ENCODE measurements at regions of chr22 and their contacts with region 1.

Region 1: GRCh38 chr22:36454916-36455570 is 26.4 kb downstream of the TXN2 start:
- DNase-seq: peak; percentile 81 to 96
- H3K4me3 ChIP-seq: peak overlapping the region; percentile 61
- H3K27ac ChIP-seq: peak overlapping the region; percentile 7; the same call in 1 of the 2 replicates
- H3K4me1 ChIP-seq: peaks cover 62% of the 10 kb centered on the region
- H3K27me3 ChIP-seq: no peaks in the 10 kb centered on the region
- CTCF ChIP-seq: 0 out of 2 replicates have a peak, but pooled peaks have one; percentile 15

Region 2: GRCh38 chr22:35357883-35358621 is 1097.0 kb before region 1 on chr22:
- CTCF ChIA-PET with region 1: no interaction called
- POLR2A ChIA-PET with region 1: interaction called, 11 read pairs
- intact Hi-C with region 1: no loop called
- DNase-seq: peak; percentile 78 to 98
- H3K4me3 ChIP-seq: no peak overlapping the region
- H3K27ac ChIP-seq: peak overlapping the region; percentile 74
- H3K4me1 ChIP-seq: peaks cover 8% of the 10 kb centered on the region
- H3K27me3 ChIP-seq: no peaks in the 10 kb centered on the region
- CTCF ChIP-seq: no peak

Region 3: GRCh38 chr22:36311386-36312358 is 143.4 kb before region 1 on chr22:
- CTCF ChIA-PET with region 1: no interaction called
- POLR2A ChIA-PET with region 1: no interaction called
- intact Hi-C with region 1: no loop called
- DNase-seq: peak; percentile 72 to 78
- H3K4me3 ChIP-seq: no peak overlapping the region
- H3K27ac ChIP-seq: no peak overlapping the region
- H3K4me1 ChIP-seq: 0 out of 2 replicates have a peak, but pooled peaks cover 9% of the 10 kb centered on the region
- H3K27me3 ChIP-seq: no peaks in the 10 kb centered on the region
- CTCF ChIP-seq: no peak

Region 4: GRCh38 chr22:36359181-36359996 is 95.7 kb before region 1 on chr22:
- CTCF ChIA-PET with region 1: interaction called, 3 read pairs
- POLR2A ChIA-PET with region 1: interaction called, 10 read pairs
- intact Hi-C with region 1: no loop called
- DNase-seq: no peak
- H3K4me3 ChIP-seq: no peak overlapping the region
- H3K27ac ChIP-seq: peak overlapping the region; percentile 25
- H3K4me1 ChIP-seq: peaks cover 75% of the 10 kb centered on the region
- H3K27me3 ChIP-seq: no peaks in the 10 kb centered on the region
- CTCF ChIP-seq: no peak

Region 5: GRCh38 chr22:36377022-36377631 is 77.9 kb before region 1 on chr22:
- CTCF ChIA-PET with region 1: no interaction called
- POLR2A ChIA-PET with region 1: interaction called, 12 read pairs
- intact Hi-C with region 1: no loop called
- DNase-seq: no peak
- H3K4me3 ChIP-seq: no peak overlapping the region
- H3K27ac ChIP-seq: peak overlapping the region; percentile 4; the same call in 1 of the 2 replicates
- H3K4me1 ChIP-seq: peaks cover 93% of the 10 kb centered on the region
- H3K27me3 ChIP-seq: no peaks in the 10 kb centered on the region
- CTCF ChIP-seq: no peak